ENCODE measurements at regions of chr2 and their contacts with region 1.

Region 1: GRCh38 chr2:101883863-101884262 is 107.9 kb upstream of the IL1R2 start:
- H3K4me3 ChIP-seq: no peak overlapping the region
- H3K27ac ChIP-seq: no peak overlapping the region
- H3K4me1 ChIP-seq: no peaks in the 10 kb centered on the region
- CTCF ChIP-seq: 0 out of 2 replicates have a peak, but pooled peaks have one; percentile 30

Region 2: DNA sequence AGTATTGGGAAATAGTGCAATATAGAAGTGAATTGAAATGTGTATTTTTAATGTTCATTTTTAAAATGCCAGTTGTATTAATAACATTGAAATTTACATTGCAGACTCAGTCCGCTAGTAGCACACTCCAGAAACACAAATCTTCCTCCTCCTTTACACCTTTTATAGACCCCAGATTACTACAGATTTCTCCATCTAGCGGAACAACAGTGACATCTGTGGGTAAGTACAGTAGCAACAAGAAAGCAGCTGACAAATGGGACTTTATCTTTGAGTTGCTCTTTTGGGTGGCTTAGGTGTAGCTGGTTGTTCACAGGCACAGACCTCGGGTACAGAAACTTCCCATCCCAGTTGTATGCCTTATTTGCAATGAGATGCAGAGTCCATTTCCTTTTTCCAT is 10.3 kb before region 1 on chr2:
- CTCF ChIA-PET with region 1: interaction called, 13 read pairs
- POLR2A ChIA-PET with region 1: no interaction called
- H3K4me3 ChIP-seq: no peak overlapping the region
- H3K27ac ChIP-seq: no peak overlapping the region
- H3K4me1 ChIP-seq: no peaks in the 10 kb centered on the region
- CTCF ChIP-seq: no peak

Measured in HEK293 (cell line).